Naive thymus-derived CD4-positive, alpha-beta T cell (primary cell): ENCODE measurements at regions of chr17 and their contacts with region 1.

Region 1: DNA sequence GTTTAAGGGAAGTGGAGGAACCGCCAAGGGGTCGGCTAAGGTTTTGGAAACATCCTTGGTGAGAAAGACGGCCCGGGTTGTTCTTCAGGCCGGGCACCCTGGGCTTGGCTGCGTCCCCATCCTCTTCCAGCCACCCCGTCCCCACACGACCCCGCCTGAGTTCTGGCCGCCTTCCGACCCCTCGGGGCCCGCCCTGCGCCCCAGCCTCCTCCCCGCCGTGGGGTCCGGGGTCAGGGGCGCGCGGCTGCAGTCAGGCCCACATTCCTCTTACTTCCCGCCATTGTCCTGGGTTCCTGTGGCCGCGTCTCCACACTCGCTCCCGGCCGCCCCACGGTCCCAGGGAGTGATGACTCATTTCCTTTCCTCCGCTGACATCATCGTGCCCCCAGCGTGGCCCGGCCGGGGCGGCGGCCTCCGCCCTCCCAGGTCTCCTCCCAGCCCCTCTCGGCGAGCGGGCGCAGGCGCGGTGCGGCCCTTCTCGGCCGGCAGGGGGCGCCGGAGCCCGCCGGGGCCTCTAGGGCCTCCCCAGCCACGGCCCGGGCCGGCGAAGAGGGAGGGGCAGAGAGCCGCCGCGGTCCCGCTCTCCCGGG is 59.6 kb downstream of the WSB1 start:
- DNase-seq: peak; percentile 68 to 95 (median 77)
- ATAC-seq: peak; percentile 96
- H3K4me3 ChIP-seq: peak overlapping the region; percentile 85
- H3K4me3 Mint-ChIP-seq: peak overlapping the region; percentile 30 to 93 (median 78)
- H3K27ac ChIP-seq: peak overlapping the region; percentile 83
- H3K27ac Mint-ChIP-seq: peak overlapping the region; percentile 46 to 94 (median 79)
- H3K4me1 ChIP-seq: peaks cover 3 to 12% of the 10 kb centered on the region in 2 donors
- H3K4me1 Mint-ChIP-seq: peaks cover 12 to 31% (median 21%) of the 10 kb centered on the region in 7 donors
- H3K27me3 ChIP-seq: no peaks in the 10 kb centered on the region
- H3K27me3 Mint-ChIP-seq: no peaks in the 10 kb centered on the region

Region 2: DNA sequence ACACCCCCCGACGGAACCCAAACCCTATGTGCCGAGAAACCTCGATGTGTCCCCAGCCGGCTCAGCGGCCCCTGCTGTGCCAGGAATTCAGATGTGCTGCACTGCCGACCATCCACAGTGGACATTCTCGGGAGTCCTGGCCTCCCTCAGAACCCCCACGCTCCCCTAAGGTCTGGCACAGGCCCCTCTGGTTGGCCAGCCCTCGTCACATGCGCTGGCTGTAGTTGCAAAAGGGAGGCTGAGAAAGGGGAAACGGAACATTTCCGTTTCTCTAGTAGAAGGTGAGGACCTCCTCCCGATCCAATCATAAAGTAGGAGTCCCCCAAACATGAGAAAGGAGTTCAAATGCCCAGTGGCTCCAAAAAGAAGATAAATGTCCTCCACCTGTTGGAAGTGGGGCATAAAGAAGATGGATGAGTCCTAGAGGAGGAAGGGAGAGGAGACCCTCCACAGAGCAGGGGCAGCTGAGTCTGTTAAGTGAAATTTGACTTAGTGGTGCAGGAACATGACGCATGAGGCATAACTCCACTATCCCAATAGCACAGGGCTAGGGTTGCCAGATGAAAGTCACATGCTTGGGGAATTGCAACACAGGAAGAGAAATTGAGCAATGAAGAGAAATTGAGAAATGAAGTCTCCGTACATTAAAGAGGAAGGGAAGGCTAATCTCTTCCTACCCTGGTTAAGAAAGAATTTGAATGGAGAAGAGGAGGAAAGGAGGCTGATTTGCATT is 108.9 kb before region 1 on chr17:
- CTCF ChIA-PET with region 1: no interaction called
- POLR2A ChIA-PET with region 1: no interaction called
- intact Hi-C with region 1: no loop called
- DNase-seq: no peak
- ATAC-seq: peak; percentile 83
- H3K4me3 ChIP-seq: no peak overlapping the region
- H3K4me3 Mint-ChIP-seq: no peak overlapping the region
- H3K27ac ChIP-seq: no peak overlapping the region
- H3K27ac Mint-ChIP-seq: no peak overlapping the region
- H3K4me1 ChIP-seq: no peaks in the 10 kb centered on the region
- H3K4me1 Mint-ChIP-seq: peaks cover 0 to 25% (median 5%) of the 10 kb centered on the region in 7 donors
- H3K27me3 ChIP-seq: no peaks in the 10 kb centered on the region
- H3K27me3 Mint-ChIP-seq: peaks cover 4 to 27% (median 7%) of the 10 kb centered on the region in 5 donors

Region 3: DNA sequence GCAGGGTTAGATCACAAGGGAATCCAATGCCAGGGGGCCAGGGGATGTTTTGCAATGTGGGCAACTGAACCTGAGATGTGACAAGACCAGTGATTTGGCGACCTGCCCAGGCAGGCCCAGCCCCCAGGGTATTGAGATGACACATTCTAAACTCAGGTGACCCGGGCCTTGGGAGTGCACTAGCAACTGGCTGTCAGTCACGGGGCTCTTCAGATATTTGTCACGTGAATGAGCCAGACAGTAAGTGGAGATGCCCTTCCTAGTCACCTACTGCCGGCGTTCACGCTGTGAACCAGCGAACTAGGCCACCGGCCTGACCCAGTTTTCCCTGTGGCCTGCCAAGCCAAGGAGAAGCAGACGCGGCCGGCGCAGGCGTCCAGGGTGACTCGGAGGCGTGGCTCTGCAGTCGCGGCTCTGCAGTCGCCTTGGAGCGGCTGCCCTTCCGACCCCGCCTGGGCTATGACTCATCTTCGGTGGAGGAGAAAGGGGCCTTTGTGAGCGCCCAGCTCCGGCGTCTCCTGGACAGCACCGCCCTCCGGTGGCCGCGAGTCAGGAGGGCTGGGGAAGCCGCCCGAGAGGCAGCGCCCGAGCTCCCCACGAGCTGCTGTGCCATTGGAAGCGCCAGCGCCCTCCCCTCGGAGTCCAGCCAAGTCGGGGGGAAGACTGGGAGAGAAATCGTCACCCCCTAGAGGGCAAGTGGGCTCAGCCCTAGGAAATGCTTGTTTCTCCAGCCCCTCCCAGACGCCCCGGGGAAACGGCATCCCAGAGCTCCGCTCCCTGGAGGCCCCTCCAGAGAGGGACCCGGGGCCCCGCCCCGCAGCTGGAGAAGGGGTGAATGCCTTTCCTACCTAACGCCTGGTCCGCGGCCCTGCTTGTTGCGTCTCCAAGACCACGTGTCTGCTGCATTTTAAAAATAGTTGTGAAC is 20.8 kb before region 1 on chr17:
- CTCF ChIA-PET with region 1: no interaction called
- POLR2A ChIA-PET with region 1: no interaction called
- intact Hi-C with region 1: loop called (anchors 1 kb)
- DNase-seq: peak; percentile 49 to 90 (median 71)
- ATAC-seq: peak; percentile 94
- H3K4me3 ChIP-seq: peak overlapping the region; percentile 72
- H3K4me3 Mint-ChIP-seq: peak overlapping the region; percentile 75 to 90 (median 86)
- H3K27ac ChIP-seq: peak overlapping the region; percentile 23
- H3K27ac Mint-ChIP-seq: peak overlapping the region in 8 of 9 donors; percentile 43 to 92 (median 80)
- H3K4me1 ChIP-seq: peaks cover 6 to 10% of the 10 kb centered on the region in 2 donors
- H3K4me1 Mint-ChIP-seq: peaks cover 6 to 25% (median 18%) of the 10 kb centered on the region in 7 donors
- H3K27me3 ChIP-seq: no peaks in the 10 kb centered on the region
- H3K27me3 Mint-ChIP-seq: peaks cover 0 to 3% (median 0%) of the 10 kb centered on the region in 5 donors

Region 4: GRCh38 chr17:27381007-27381501 is 27.5 kb after region 1 on chr17:
- CTCF ChIA-PET with region 1: interaction called, 3 read pairs
- POLR2A ChIA-PET with region 1: no interaction called
- intact Hi-C with region 1: loop called in 1 of 2 experiments (anchors 2 kb)
- DNase-seq: peak; percentile 31 to 87 (median 53)
- ATAC-seq: peak; percentile 94
- H3K4me3 ChIP-seq: no peak overlapping the region
- H3K4me3 Mint-ChIP-seq: no peak overlapping the region
- H3K27ac ChIP-seq: no peak overlapping the region
- H3K27ac Mint-ChIP-seq: no peak overlapping the region
- H3K4me1 ChIP-seq: no peaks in the 10 kb centered on the region
- H3K4me1 Mint-ChIP-seq: peaks cover 0 to 7% (median 0%) of the 10 kb centered on the region in 7 donors
- H3K27me3 ChIP-seq: peaks cover 0 to 4% of the 10 kb centered on the region in 2 donors
- H3K27me3 Mint-ChIP-seq: peaks cover 12 to 28% (median 24%) of the 10 kb centered on the region in 5 donors

Region 5: GRCh38 chr17:27473748-27474609 is 120.4 kb after region 1 on chr17:
- CTCF ChIA-PET with region 1: no interaction called
- POLR2A ChIA-PET with region 1: no interaction called
- intact Hi-C with region 1: loop called in 1 of 2 experiments (anchors 5 kb)
- DNase-seq: peak in 6 of 9 donors; percentile 12 to 76 (median 18)
- ATAC-seq: peak; percentile 85
- H3K4me3 ChIP-seq: peak overlapping the region; percentile 11
- H3K4me3 Mint-ChIP-seq: peak overlapping the region; percentile 16 to 86 (median 64)
- H3K27ac ChIP-seq: peak overlapping the region; percentile 43
- H3K27ac Mint-ChIP-seq: peak overlapping the region; percentile 76 to 97 (median 89)
- H3K4me1 ChIP-seq: peaks cover 19 to 44% of the 10 kb centered on the region in 2 donors
- H3K4me1 Mint-ChIP-seq: peaks cover 41 to 89% (median 49%) of the 10 kb centered on the region in 7 donors
- H3K27me3 ChIP-seq: no peaks in the 10 kb centered on the region
- H3K27me3 Mint-ChIP-seq: no peaks in the 10 kb centered on the region